Ascending aorta (tissue), 2 donors: ENCODE measurements at regions of chr20 and their contacts with region 1.

Region 1: GRCh38 chr20:9616833-9617489 is 102.6 kb downstream of the LAMP5 start:
- DNase-seq: peak in 1 of 2 donors; percentile 74
- H3K4me3 ChIP-seq: no peak overlapping the region
- H3K27ac ChIP-seq: no peak overlapping the region
- H3K4me1 ChIP-seq: no peaks in the 10 kb centered on the region
- H3K27me3 ChIP-seq: no peaks in the 10 kb centered on the region
- CTCF ChIP-seq: peak; percentile 64 to 92 (median 83)

Region 2: DNA sequence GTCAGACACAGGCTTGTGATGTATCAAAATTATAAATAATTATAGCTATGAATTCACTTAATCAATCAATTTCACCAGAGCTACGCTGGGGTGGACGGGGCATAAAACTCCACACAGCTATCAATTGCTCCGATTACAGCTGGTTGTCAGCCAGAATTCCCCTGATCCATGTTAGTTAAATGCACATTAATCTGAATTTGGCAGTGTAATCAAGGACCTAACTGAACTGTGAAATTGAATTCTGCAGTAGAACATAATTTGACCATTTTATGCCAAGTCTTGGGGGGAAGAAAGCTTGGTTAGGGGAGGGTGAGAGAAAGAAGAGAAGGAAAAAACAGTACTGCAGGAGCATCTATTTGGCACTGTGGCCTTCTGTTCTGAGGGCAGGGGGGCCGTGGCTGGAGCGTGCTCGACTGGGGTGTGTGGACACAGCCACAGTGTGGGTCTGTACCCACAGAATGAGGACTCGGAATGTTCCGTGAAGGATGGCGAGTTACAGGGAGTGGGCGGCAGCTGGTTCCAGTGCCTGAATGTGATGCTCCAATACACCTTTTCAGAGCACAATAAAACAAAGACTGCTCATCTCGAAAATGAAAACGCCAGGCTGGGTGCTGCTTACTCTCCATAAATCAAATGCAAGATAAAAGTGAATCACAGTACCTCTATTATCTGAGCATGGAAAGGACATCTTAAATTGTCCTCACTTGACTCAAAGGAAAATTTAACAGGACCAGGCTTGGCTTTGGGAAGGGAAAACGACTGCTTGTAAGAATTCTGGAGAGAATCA is 43.4 kb before region 1 on chr20:
- intact Hi-C with region 1: no loop called
- DNase-seq: no peak
- H3K4me3 ChIP-seq: no peak overlapping the region
- H3K27ac ChIP-seq: no peak overlapping the region
- H3K4me1 ChIP-seq: no peaks in the 10 kb centered on the region
- H3K27me3 ChIP-seq: no peaks in the 10 kb centered on the region
- CTCF ChIP-seq: no peak

Region 3: GRCh38 chr20:9912858-9913434 is 296.0 kb after region 1 on chr20:
- intact Hi-C with region 1: loop called (anchors 1 kb)
- DNase-seq: peak in 1 of 2 donors; percentile 68
- H3K4me3 ChIP-seq: no peak overlapping the region
- H3K27ac ChIP-seq: no peak overlapping the region
- H3K4me1 ChIP-seq: no peaks in the 10 kb centered on the region
- H3K27me3 ChIP-seq: no peaks in the 10 kb centered on the region
- CTCF ChIP-seq: peak; percentile 37 to 81 (median 74)